ENCODE measurements at regions of chr20 and their contacts with region 1.

Region 1: GRCh38 chr20:58980700-58981627 is at the start of gene NELFCD:
- DNase-seq: peak; percentile 79 to 96
- H3K4me3 ChIP-seq: peak within 1 kb of the TSS; percentile 74
- CTCF ChIP-seq: no peak
- POLR2A ChIP-seq: no peak
- total RNA-seq, gene NELFCD: 36.9 to 53.8 (median 44.6) TPM

Region 2: DNA sequence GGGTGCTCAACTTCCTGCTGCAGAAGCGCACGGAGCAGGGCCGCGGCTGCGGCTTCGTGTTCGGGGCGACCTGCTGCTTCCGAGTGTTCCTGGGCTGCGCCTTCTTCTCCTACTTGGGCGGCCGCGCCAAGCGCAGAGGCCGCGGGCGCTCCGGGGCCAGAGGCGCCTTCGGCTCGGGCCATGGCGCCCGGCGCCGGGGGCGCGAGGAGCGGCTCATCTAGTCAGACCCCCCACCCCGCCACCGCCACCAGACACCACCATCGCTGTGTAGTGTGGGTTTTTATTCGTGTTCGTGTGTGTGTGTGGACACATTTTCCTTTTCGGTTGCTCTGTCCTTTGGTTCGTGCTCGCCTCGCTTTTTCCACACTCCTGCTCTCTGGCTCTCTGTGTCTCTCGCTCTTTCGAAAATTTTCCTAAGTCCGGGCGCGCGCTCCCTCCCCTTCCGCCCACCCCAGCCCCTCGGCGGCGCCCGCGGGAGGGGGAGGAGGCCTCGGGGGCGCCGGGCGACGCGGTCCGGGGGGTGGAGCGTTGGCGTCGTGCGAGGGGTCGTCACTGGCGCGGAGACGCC is 90.4 kb before region 1 on chr20:
- intact Hi-C with region 1: loop called (anchors 5 kb)
- DNase-seq: peak; percentile 69 to 96
- H3K4me3 ChIP-seq: peak overlapping the region; percentile 52
- CTCF ChIP-seq: no peak
- POLR2A ChIP-seq: no peak

Region 3: DNA sequence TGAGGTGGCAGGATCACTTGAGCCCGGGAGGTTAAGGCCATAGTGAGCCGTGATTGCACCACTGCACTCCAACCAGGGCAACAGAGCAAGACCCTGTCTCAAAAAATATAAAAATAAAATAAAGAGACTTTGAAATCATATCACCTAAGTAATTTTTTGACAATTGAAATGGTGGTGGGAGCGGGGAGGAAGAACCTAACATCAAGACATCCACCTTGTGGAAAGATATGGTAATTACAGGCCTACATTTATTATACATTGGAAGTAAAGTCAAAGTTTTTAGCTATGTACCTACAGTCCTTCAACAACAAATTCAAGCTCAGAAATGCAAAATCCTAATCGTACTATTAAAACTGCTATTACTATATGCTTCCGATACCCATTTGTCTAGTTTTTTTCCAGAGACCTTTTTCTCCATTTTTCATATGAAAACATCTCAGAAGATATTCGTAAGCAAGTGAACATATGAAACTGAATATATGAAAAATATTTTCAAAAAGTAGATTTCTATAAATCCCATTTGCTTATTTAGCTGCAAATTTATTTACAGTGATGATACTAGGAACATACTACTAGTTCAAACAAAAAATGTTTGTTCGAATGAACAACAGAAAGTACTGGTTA is 869.2 kb after region 1 on chr20:
- intact Hi-C with region 1: no loop called
- DNase-seq: no peak
- H3K4me3 ChIP-seq: no peak overlapping the region
- CTCF ChIP-seq: no peak
- POLR2A ChIP-seq: no peak

Measured in lower leg skin (tissue), 4 donors.